ENCODE measurements at regions of chr11 and their contacts with region 1.

Region 1: GRCh38 chr11:119666463-119667131 is 62.4 kb downstream of the NECTIN1 start:
- DNase-seq: peak; percentile 56 to 77
- H3K4me3 ChIP-seq: no peak overlapping the region
- H3K27ac ChIP-seq: no peak overlapping the region
- H3K4me1 ChIP-seq: peaks cover 0 to 7% of the 10 kb centered on the region in 2 donors
- H3K27me3 ChIP-seq: no peaks in the 10 kb centered on the region
- CTCF ChIP-seq: peak; percentile 87 to 97 (median 93)
- POLR2A ChIP-seq: no peak

Region 2: DNA sequence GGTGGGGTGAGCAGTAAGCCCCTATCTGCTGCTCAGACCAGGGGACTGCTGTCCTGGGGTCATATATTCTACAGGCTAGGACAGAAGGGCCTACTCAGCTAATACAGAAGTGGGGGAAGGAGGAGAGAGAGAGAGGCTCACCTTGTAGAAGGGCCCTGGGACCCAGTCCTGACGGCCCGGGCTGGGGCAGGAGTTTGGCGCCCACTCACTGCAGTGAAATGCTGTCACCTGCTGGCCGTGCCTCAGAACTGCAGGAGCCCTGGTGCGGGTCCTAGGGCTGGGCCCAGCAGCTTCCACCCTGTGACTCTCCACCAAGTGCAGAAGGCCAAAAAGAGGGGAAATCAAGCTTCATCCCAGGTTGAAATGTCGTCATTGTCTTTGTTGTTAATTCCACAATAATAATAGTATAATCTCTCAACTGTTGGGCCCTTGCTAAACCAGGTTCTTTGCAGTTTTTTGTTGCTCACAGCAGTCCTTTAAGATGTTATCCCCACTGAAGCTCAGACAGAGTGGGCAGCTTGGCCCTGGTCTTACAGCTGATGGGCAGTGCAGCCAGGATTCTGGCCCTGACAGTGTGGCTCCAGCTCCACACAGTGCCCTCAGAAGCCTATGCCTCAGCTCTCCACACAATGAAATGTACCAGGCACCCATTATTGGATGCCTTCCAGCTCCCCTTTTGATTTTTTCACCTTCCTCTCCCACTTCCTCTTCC is 441.7 kb after region 1 on chr11:
- intact Hi-C with region 1: loop called (anchors 10 kb)
- DNase-seq: peak; percentile 44 to 73
- H3K4me3 ChIP-seq: no peak overlapping the region
- H3K27ac ChIP-seq: no peak overlapping the region
- H3K4me1 ChIP-seq: no peaks in the 10 kb centered on the region
- H3K27me3 ChIP-seq: no peaks in the 10 kb centered on the region
- CTCF ChIP-seq: peak; percentile 97 to 100 (median 98)
- POLR2A ChIP-seq: peak in 1 of 2 donors; percentile 12